Heart left ventricle (tissue), 16 donors: ENCODE measurements at regions of chr2 and their contacts with region 1.

Region 1: GRCh38 chr2:121530212-121530705 is 421 bp upstream of the RNU4ATAC start:
- DNase-seq: peak; percentile 82 to 91 (median 86)
- ATAC-seq: peak; percentile 81 to 84 (median 83)
- H3K4me3 ChIP-seq: peak overlapping the region; percentile 64 to 88 (median 73)
- H3K27ac ChIP-seq: peak overlapping the region; percentile 90 to 100 (median 96)
- H3K4me1 ChIP-seq: peaks cover 0 to 80% (median 50%) of the 10 kb centered on the region in 12 donors
- H3K27me3 ChIP-seq: no peaks in the 10 kb centered on the region
- CTCF ChIP-seq: no peak
- POLR2A ChIP-seq: no peak

Region 2: GRCh38 chr2:121583555-121583954 is 53.3 kb after region 1 on chr2:
- intact Hi-C with region 1: loop called in 2 of 10 experiments (anchors 5 to 10 kb)
- DNase-seq: no peak
- ATAC-seq: no peak
- H3K4me3 ChIP-seq: no peak overlapping the region
- H3K27ac ChIP-seq: no peak overlapping the region
- H3K4me1 ChIP-seq: peaks cover 4 to 52% (median 23%) of the 10 kb centered on the region in 12 donors
- H3K27me3 ChIP-seq: no peaks in the 10 kb centered on the region
- CTCF ChIP-seq: no peak
- POLR2A ChIP-seq: no peak

Region 3: DNA sequence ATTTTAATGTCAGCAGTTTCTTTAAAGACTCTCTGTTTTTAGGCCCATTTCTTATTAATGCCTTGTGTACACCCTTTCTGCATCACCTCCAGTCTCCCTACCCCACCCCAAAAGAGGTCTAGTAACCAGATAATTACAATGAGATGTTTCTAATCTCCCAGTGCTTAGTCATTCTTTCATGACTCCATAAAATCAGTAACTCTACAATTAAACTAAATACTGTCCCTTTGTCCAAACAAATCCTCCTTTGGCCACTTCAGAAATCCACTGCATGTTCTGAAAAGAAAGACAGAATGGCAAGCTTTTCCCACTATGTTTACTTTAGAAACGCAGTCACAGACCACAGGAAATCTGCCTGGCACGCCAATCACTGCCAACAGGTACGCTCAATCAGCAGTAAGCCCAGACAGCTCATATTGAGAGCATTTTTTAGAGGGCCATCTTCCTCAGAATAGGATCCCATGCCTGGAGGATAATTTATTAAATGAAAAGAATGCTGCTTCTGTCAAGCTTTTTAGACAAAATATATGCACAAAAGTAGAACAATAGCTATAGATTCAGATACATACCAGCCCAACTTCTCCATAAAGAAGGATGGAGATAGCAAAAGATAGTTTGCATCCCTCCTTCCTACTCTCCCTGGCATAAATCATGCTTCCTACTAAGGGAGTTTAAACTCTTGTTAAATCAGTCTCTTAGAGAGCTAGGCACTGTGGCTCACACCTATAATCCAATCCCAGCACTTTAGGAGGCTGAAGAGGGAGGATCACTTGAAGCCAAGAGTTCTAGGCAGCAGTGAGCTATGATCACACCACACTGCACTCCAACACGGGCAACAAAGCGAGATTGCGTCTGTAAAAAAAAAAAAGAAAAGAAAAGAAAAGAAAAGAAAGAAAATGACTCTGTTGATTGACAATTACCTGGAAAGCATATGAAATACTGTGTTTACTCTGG is 104.4 kb after region 1 on chr2:
- intact Hi-C with region 1: loop called in 1 of 10 experiments (anchors 5 kb)
- DNase-seq: no peak
- ATAC-seq: no peak
- H3K4me3 ChIP-seq: no peak overlapping the region
- H3K27ac ChIP-seq: peak overlapping the region in 11 of 12 donors; percentile 8 to 76 (median 61)
- H3K4me1 ChIP-seq: peaks cover 5 to 46% (median 39%) of the 10 kb centered on the region in 12 donors
- H3K27me3 ChIP-seq: no peaks in the 10 kb centered on the region
- CTCF ChIP-seq: no peak
- POLR2A ChIP-seq: no peak

Region 4: GRCh38 chr2:121710470-121711170 is 180.4 kb after region 1 on chr2:
- intact Hi-C with region 1: loop called in 7 of 10 experiments (anchors 5 to 10 kb)
- DNase-seq: no peak
- ATAC-seq: no peak
- H3K4me3 ChIP-seq: no peak overlapping the region
- H3K27ac ChIP-seq: no peak overlapping the region
- H3K4me1 ChIP-seq: peaks cover 0 to under 1% (median 0%) of the 10 kb centered on the region in 12 donors
- H3K27me3 ChIP-seq: no peaks in the 10 kb centered on the region
- CTCF ChIP-seq: no peak
- POLR2A ChIP-seq: no peak

Region 5: GRCh38 chr2:121736462-121737341 is 206.4 kb after region 1 on chr2 and contains the start of gene NIFK:
- intact Hi-C with region 1: loop called in 6 of 10 experiments (anchors 2 to 5 kb)
- DNase-seq: peak; percentile 99 to 100 (median 99)
- ATAC-seq: peak; percentile 98 to 99 (median 98)
- H3K4me3 ChIP-seq: peak within 1 kb of the TSS; percentile 40 to 98 (median 82)
- H3K27ac ChIP-seq: peak within 1 kb of the TSS; percentile 53 to 86 (median 78)
- H3K4me1 ChIP-seq: peaks cover 0 to 18% (median 9%) of the 10 kb centered on the region in 12 donors
- H3K27me3 ChIP-seq: no peaks in the 10 kb centered on the region
- CTCF ChIP-seq: peak in 2 of 12 donors; percentile 13 to 23
- POLR2A ChIP-seq: peak in 1 of 2 donors; percentile 35
- total RNA-seq, gene NIFK: 19.1 to 41.3 (median 28.8) TPM